HEK293 (cell line): ENCODE measurements at regions of chr1 and their contacts with region 1.

Region 1: GRCh38 chr1:232880354-232880753 is 70.1 kb upstream of the NTPCR start:
- H3K4me3 ChIP-seq: no peak overlapping the region
- H3K27ac ChIP-seq: no peak overlapping the region
- H3K4me1 ChIP-seq: no peaks in the 10 kb centered on the region
- CTCF ChIP-seq: peak; percentile 62; the same call in 1 of the 2 replicates

Region 2: DNA sequence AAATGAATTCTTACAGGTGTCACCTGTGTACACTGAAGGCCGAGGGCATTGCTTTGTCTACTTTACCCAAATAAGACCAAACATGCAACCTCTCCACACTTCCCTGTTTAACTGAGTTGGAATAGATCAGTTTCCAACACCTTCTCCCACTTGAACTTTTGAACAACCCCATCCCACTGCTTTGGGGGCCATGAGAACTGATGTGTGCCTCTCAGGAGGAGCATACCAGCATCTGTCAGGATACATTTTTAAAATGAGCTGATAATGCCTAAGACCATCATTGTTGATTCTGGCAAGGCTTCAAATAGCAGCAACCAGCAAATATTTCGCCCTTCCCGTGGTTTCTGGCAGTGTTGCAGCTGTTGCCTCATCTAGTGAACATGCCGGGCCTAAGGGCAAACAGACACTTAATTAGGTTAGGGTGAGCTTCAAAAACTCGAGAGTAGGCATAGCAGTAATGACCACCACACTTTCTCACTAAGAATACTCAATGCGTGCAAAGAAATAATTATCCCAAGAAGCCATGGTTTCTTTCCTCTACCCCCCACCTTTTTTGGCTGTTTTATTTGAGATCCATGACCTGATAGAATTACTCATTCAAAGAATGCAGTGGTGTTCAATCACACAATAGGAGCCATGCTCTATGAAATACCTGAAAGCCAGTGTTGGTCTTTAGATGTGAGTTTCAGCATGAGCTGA is 11.4 kb before region 1 on chr1:
- CTCF ChIA-PET with region 1: interaction called, 31 read pairs
- POLR2A ChIA-PET with region 1: interaction called, 8 read pairs
- H3K4me3 ChIP-seq: no peak overlapping the region
- H3K27ac ChIP-seq: peak overlapping the region; percentile 76
- H3K4me1 ChIP-seq: peaks cover 11% of the 10 kb centered on the region
- CTCF ChIP-seq: no peak; the same call in 1 of the 2 replicates

Region 3: GRCh38 chr1:232891071-232891470 is 10.7 kb after region 1 on chr1:
- CTCF ChIA-PET with region 1: interaction called, 70 read pairs
- POLR2A ChIA-PET with region 1: interaction called, 3 read pairs
- H3K4me3 ChIP-seq: no peak overlapping the region
- H3K27ac ChIP-seq: no peak overlapping the region
- H3K4me1 ChIP-seq: no peaks in the 10 kb centered on the region
- CTCF ChIP-seq: no peak

Region 4: DNA sequence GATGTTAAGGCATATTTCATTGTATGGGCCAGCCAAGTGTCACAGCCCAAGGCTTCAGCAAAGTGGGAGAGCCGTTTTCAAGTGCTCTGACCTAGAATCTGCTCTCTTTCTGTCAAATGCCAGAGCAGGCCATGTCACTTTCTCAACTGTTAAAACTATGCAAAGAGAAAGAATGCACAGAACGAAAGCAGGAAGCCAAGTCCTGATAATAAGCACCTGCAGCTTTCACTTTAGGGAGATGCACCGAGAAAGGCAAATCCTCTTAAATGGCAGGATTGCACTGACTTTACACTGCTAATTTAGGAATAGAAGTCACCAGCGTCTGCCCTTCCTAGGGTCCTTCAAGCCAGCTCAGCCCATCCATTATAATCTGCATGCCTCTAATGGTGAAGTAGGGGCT is 20.9 kb after region 1 on chr1:
- CTCF ChIA-PET with region 1: interaction called, 45 read pairs
- POLR2A ChIA-PET with region 1: no interaction called
- H3K4me3 ChIP-seq: no peak overlapping the region
- H3K27ac ChIP-seq: no peak overlapping the region
- H3K4me1 ChIP-seq: no peaks in the 10 kb centered on the region
- CTCF ChIP-seq: no peak